H1 (cell line): ENCODE measurements at regions of chr19 and their contacts with region 1.

Region 1: GRCh38 chr19:28612275-28612769 is 600.6 kb downstream of the UQCRFS1 start:
- DNase-seq: no peak
- H3K4me3 ChIP-seq: no peak overlapping the region
- H3K27ac ChIP-seq: no peak overlapping the region
- H3K4me1 ChIP-seq: no peaks in the 10 kb centered on the region
- H3K27me3 ChIP-seq: no peaks in the 10 kb centered on the region
- CTCF ChIP-seq: peak; percentile 32 to 39 (median 34); a peak in 3 of 4 replicates
- EP300 ChIP-seq: no peak
- POLR2A ChIP-seq: no peak
- RAD21 ChIP-seq: peak in 1 of 2 experiments; percentile 39; a peak in 1 of 4 replicates

Region 2: DNA sequence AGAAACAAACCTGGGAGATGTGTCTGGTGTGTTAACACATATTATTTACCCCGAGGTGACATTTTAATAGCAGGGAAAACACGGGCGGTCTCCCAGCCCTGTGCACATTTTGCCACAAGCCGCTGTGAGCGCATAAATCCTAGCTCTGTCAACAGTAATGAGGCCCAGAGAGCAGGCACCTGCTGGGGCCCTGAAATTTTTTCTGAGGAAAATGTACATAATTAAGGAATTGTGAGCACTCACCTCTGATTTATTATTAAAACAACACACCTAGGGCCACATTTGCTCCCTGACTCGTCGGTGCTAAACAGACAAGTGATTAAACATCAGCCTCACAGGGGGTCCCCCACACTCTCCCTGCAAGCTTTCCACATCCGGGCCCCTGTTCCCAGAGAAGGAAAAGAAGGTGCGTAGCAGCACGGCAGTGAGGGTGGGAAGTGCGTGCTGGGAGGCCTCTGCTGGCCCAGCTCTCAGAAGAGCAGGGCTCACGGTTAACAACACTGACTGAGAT is 15.7 kb before region 1 on chr19:
- CTCF ChIA-PET with region 1: interaction called, 20 read pairs
- POLR2A ChIA-PET with region 1: no interaction called
- DNase-seq: no peak
- H3K4me3 ChIP-seq: no peak overlapping the region
- H3K27ac ChIP-seq: no peak overlapping the region
- H3K4me1 ChIP-seq: 0 out of 7 replicates have a peak, but pooled peaks cover 0 to 3% (median 0%) of the 10 kb centered on the region in 4 experiments
- H3K27me3 ChIP-seq: no peaks in the 10 kb centered on the region
- CTCF ChIP-seq: no peak
- EP300 ChIP-seq: no peak
- POLR2A ChIP-seq: no peak
- RAD21 ChIP-seq: no peak

Region 3: DNA sequence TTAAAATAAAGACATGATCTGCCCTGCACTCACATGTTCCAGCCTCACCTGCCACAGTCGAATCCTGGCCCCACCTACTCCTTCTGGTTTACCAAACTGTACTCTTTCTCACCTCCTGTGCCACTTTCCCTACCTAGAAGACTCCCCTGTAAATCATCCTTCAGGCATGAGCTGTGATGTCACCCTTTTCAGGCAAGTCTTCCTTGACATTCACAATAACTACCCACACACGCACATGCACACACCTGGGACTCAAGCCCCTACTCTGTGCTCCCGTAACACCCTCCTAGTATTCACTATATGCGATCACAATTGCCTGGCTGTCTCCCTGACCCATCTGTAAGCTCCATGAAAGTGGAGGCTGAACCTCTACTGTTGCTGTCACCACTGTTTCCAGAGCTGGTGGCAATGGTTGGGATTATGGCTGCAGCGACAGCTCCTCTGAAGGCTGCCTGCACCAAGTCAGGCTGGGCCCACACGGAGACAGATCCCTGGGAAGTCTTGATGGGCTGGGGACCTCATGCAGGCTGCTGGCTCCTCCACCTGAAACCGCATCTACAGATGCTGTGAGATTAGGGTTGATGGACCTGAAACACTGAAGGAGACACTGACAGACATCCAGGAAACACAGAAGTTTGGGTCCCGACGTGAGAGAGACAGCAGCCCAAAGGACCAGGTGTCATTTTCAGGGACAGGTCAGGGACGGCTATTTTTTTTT is 10.4 kb before region 1 on chr19:
- CTCF ChIA-PET with region 1: interaction called, 20 read pairs
- POLR2A ChIA-PET with region 1: no interaction called
- DNase-seq: no peak
- H3K4me3 ChIP-seq: no peak overlapping the region
- H3K27ac ChIP-seq: no peak overlapping the region
- H3K4me1 ChIP-seq: 0 out of 7 replicates have a peak, but pooled peaks cover 0 to under 1% (median 0%) of the 10 kb centered on the region in 4 experiments
- H3K27me3 ChIP-seq: no peaks in the 10 kb centered on the region
- CTCF ChIP-seq: no peak
- EP300 ChIP-seq: no peak
- POLR2A ChIP-seq: no peak
- RAD21 ChIP-seq: no peak

Region 4: GRCh38 chr19:28652765-28653164 is 40.4 kb after region 1 on chr19:
- CTCF ChIA-PET with region 1: no interaction called
- POLR2A ChIA-PET with region 1: no interaction called
- DNase-seq: no peak
- H3K4me3 ChIP-seq: no peak overlapping the region
- H3K27ac ChIP-seq: no peak overlapping the region
- H3K4me1 ChIP-seq: peaks cover 0 to 5% (median 3%) of the 10 kb centered on the region in 4 experiments; a peak in 3 of 7 replicates
- H3K27me3 ChIP-seq: no peaks in the 10 kb centered on the region
- CTCF ChIP-seq: no peak
- EP300 ChIP-seq: no peak
- POLR2A ChIP-seq: no peak
- RAD21 ChIP-seq: no peak